Dorsolateral prefrontal cortex (tissue), 120 donors: ENCODE measurements at regions of chr12 and their contacts with region 1.

Region 1: DNA sequence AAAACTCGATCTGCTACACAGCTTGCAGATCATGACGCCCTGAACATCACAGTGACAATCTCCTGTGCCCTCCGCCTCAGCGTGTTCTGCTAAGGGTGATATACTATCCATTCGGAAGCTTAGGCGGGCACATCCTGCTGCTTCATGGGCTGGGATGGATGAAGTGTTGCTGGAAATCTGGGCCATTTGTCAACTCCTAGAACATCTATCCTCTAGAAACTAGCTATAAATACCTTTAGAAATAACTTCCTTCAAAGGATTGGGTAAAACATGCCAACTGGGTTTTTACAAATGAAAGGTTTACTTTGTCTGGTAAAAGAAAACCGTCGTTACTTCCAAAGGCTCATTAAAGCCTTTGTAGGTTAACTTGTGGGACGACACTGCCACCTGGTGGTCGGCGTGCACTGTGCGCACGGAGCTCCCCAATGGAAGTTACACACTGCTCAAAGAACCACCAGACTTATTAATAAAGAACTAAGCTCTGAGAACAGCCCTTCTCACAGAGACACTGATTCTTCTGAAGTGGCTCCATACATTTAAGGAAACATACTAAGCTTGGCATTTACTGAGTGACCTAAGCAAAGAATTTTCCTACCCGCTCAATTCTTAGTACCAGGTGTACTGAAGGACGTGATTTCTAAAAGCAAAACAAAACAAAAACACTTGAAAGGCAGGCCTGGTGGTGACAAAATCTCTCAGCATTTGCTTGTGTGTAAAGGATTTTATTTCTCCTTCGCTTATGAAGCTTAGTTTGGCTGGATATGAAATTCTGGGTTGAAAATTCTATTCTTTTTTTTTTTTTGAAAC is 21.6 kb upstream of the CACNA2D4 start:
- DNase-seq: peak; percentile 83 to 97 (median 89)
- H3K4me3 ChIP-seq: peak overlapping the region in 31 of 59 donors; percentile 2 to 46 (median 18)
- H3K27ac ChIP-seq: peak overlapping the region; percentile 14 to 100 (median 83)
- H3K27me3 ChIP-seq: no peaks in the 10 kb centered on the region
- CTCF ChIP-seq: peak; percentile 94 to 100 (median 99)

Region 2: DNA sequence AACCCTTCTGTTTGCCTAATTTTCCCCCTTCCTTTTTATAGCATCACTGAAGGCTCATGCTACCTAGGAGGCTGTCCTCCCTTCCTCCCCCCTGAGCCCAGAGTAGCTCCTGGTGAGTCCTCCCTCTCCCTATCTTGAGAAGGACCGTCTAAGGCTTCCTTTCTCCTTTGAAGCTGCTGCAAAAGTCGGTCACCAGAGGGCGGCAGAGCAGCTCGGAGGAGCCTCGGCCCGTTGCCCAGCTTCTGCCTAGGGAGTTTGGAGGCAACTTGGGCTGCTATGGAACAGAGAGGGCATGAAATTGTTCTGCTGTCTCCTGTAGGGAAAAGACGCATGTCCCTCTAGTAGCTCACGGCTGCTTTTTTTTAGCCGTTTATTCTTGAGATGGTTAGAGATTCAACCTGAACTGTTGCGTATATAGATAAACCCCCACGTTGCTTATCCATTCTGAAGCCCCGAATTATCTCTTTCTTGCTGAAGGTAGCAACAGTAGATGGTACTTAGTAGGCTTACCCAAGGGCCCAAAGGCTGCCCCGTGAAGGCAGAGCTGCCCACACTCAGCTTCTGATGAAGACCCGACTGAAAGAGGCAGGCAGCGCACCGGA is 305.3 kb before region 1 on chr12:
- intact Hi-C with region 1: loop called in 1 of 2 experiments (anchors 5 kb)
- DNase-seq: peak; percentile 78 to 90 (median 86)
- H3K4me3 ChIP-seq: peak overlapping the region in 2 of 59 donors; percentile 6 to 15
- H3K27ac ChIP-seq: peak overlapping the region in 3 of 59 donors; percentile 3 to 25 (median 20)
- H3K27me3 ChIP-seq: no peaks in the 10 kb centered on the region
- CTCF ChIP-seq: peak; percentile 49 to 94 (median 86)

Region 3: GRCh38 chr12:1644534-1645438 is 295.2 kb before region 1 on chr12:
- intact Hi-C with region 1: loop called (anchors 5 kb)
- DNase-seq: peak; percentile 86 to 96 (median 95)
- H3K4me3 ChIP-seq: peak overlapping the region in 50 of 59 donors; percentile 0 to 56 (median 30)
- H3K27ac ChIP-seq: peak overlapping the region; percentile 46 to 94 (median 87)
- H3K27me3 ChIP-seq: no peaks in the 10 kb centered on the region
- CTCF ChIP-seq: peak in 26 of 56 donors; percentile 10 to 48 (median 23)

Region 4: DNA sequence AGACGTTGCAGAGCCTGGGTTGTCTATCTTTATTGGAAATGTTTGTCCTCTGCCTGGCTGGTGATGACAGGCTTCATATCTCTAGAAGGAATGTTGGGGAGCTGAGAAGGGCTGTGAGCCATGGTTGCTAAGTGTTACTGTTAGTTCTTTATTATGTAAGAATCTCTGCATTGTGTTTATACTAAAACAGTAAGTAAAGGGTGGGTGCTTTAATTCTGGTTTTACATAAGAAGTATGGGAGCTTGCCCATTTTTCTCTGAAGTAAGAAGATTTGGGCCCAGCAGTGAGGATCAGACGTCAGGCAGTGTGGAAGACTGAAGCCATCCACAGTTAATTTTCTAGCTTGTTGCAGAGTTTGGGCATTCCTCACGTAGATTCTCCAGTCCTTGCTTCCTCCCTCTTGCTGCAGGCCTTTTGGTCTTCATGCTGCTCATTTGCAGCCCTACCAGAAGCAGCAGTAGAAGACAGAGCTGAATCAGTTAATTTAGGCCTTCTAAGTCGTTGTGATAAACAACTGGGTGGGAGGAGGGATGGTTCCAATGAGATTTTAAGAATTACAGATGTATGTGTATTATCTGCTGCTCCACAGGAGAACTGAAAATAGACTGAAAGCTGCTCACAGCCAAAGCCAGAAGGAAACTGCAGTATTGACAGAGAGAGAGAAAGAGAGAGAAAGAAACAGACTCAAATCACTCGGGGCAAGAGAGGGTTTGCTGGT is 289.6 kb before region 1 on chr12:
- intact Hi-C with region 1: loop called (anchors 5 kb)
- DNase-seq: peak in 1 of 10 donors; percentile 48
- H3K4me3 ChIP-seq: no peak overlapping the region
- H3K27ac ChIP-seq: peak overlapping the region; percentile 13 to 100 (median 83)
- H3K27me3 ChIP-seq: no peaks in the 10 kb centered on the region
- CTCF ChIP-seq: no peak

Region 5: GRCh38 chr12:2273288-2273687 is 333.3 kb after region 1 on chr12:
- intact Hi-C with region 1: no loop called
- DNase-seq: peak in 1 of 10 donors; percentile 53
- H3K4me3 ChIP-seq: no peak overlapping the region
- H3K27ac ChIP-seq: peak overlapping the region in 1 of 59 donors; percentile 27
- H3K27me3 ChIP-seq: no peaks in the 10 kb centered on the region
- CTCF ChIP-seq: peak in 27 of 56 donors; percentile 8 to 48 (median 24)